ENCODE measurements at regions of chr2 and their contacts with region 1.

Region 1: DNA sequence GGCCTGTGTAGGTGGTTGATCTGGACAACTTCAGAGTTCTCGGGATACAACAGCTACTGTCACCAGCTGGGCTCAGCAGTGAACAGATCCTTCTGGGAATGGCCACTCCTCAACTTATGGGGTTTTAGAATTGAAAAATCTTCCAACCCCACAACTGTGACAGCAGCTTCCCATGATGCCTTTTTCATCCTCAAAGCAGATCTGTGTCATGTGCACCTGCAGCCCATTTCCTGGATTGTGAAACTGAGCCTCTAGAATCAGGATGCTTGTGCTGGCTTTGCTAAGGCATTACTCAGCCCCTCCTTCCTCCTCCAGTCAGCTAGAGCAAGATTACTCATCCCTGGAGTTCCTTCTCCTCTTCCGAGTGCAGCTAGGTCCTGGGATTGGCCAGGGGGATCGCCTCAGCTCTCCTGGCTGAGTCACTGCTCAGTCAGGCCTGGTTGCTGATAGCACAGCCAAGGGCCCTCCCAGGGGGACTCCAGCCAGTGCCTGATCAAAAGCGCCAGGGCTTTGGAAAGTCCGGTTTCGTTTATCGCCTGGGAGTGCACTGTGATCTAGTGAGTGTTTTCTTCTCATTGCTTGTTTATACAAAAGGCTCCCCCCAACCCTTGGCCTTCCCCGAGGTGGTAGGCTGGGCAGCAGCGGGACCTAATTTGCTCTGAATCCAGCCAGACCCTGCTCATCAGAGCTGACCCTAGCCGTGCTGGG is 2.4 kb upstream of the LPIN1 start:
- DNase-seq: peak; percentile 94
- H3K4me3 ChIP-seq: peak overlapping the region; percentile 30 to 54
- H3K27ac ChIP-seq: peak overlapping the region; percentile 60 to 81
- H3K4me1 ChIP-seq: peaks cover 22 to 47% of the 10 kb centered on the region in 2 experiments
- H3K27me3 ChIP-seq: no peaks in the 10 kb centered on the region
- CTCF ChIP-seq: no peak
- EP300 ChIP-seq: peak; percentile 72 to 74; a peak in 2 of 4 replicates
- RAD21 ChIP-seq: peak; percentile 46

Region 2: GRCh38 chr2:11357428-11357972 is 386.5 kb before region 1 on chr2:
- CTCF ChIA-PET with region 1: no interaction called
- POLR2A ChIA-PET with region 1: no interaction called
- DNase-seq: no peak
- H3K4me3 ChIP-seq: no peak overlapping the region
- H3K27ac ChIP-seq: no peak overlapping the region
- H3K4me1 ChIP-seq: no peaks in the 10 kb centered on the region
- H3K27me3 ChIP-seq: no peaks in the 10 kb centered on the region; the same call in 1 of the 2 replicates
- CTCF ChIP-seq: no peak
- EP300 ChIP-seq: no peak
- RAD21 ChIP-seq: no peak

Region 3: DNA sequence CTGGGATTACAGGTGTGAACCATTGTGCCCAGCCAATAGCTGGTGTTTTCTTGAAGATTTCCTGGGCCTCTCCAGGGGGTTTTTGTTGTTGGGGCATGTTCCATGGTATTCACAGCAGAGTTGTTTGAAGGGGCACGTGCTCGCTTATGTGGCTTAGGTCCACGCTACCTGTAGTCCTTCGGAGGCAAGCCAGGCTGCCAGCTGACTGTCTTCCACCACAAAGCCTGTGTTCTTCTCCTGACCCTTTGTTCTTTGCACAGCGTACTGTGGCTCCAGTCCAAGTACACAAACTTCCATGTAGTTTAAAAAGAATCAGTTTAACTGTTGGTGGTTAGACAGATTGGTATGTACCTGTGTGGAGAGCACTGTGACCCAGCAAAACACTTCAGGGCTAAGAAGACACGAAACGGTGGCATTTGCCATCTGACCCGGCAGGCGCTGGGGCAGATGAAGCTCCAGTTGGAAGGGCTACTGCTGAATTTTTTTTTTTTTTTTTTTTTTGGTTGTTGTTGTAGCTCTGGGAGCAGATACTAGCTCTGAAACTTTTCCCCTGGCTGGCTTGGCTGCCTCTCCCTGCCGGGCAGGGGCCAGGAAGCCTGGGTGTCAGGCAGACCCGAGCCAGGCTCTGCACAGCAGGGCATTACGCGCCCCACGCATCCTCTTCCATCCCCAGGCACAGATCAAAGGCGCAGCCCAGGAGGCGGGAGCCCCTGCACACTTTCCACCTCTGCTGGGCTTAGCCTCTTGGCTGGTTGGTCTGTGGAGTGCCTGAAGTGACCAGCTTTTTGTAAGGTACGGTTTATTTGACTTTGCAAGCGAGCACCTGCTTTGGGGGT is 204.5 kb before region 1 on chr2:
- CTCF ChIA-PET with region 1: no interaction called
- POLR2A ChIA-PET with region 1: no interaction called
- DNase-seq: no peak
- H3K4me3 ChIP-seq: no peak overlapping the region
- H3K27ac ChIP-seq: no peak overlapping the region
- H3K4me1 ChIP-seq: peaks cover 0 to 43% of the 10 kb centered on the region in 2 experiments; a peak in 2 of 4 replicates
- H3K27me3 ChIP-seq: peaks cover 16% of the 10 kb centered on the region; the same call in 1 of the 2 replicates
- CTCF ChIP-seq: no peak
- EP300 ChIP-seq: no peak
- RAD21 ChIP-seq: no peak

Region 4: GRCh38 chr2:11716689-11717321 is 27.2 kb before region 1 on chr2:
- CTCF ChIA-PET with region 1: interaction called, 31 read pairs
- POLR2A ChIA-PET with region 1: interaction called, 9 read pairs
- DNase-seq: no peak
- H3K4me3 ChIP-seq: no peak overlapping the region
- H3K27ac ChIP-seq: no peak overlapping the region
- H3K4me1 ChIP-seq: peaks cover 0 to 51% of the 10 kb centered on the region in 2 experiments; a peak in 2 of 4 replicates
- H3K27me3 ChIP-seq: peaks cover 23% of the 10 kb centered on the region; the same call in 1 of the 2 replicates
- CTCF ChIP-seq: no peak
- EP300 ChIP-seq: no peak
- RAD21 ChIP-seq: no peak

Region 5: DNA sequence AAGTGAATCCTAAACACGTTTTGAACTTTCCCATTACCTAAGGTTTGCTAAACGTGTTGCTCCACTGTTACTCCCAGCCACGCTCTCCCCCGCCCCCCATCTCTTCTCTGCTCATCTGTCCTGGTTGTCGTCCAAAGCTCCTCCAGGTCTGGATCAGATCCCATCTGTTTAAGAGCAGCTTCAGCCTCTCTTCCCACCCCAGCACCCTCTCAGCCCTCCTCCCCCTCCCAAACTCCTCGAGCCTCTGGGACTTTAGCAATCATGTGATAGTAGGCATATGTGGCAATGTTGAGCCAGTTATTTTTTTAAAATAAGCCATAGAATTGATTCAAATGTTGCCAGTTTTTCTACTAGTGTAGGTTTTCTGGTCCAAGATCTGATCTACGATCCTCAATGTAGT is 17.6 kb before region 1 on chr2:
- CTCF ChIA-PET with region 1: interaction called, 40 read pairs
- POLR2A ChIA-PET with region 1: interaction called, 4 read pairs
- DNase-seq: peak; percentile 78
- H3K4me3 ChIP-seq: no peak overlapping the region
- H3K27ac ChIP-seq: peak overlapping the region in 1 of 2 experiments; percentile 81; a peak in 2 of 4 replicates
- H3K4me1 ChIP-seq: peaks cover 0 to 21% of the 10 kb centered on the region in 2 experiments; a peak in 2 of 4 replicates
- H3K27me3 ChIP-seq: peaks cover 10% of the 10 kb centered on the region; the same call in 1 of the 2 replicates
- CTCF ChIP-seq: no peak
- EP300 ChIP-seq: peak in 1 of 2 experiments; percentile 85; a peak in 2 of 4 replicates
- RAD21 ChIP-seq: peak; percentile 23

Region 6: DNA sequence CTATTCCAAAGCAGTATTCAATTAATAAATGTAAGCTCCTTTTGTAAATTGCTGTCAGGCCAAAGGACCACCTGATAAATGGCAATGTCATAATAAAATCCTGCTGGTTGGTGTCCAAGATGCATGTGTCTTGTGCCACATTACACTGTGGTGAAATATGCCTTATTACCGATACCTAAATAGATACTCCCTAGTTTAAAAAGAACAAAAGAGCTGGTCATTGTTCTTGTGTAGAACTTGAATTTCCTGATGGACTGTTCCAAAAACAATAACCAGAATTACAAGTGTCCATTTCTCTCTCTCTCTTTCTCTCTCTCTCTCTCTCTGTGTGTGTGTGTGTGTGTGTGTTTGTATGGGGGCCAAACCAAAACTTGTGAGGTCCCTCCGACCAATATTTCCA is 11.4 kb before region 1 on chr2:
- CTCF ChIA-PET with region 1: interaction called, 40 read pairs
- POLR2A ChIA-PET with region 1: interaction called, 3 read pairs
- DNase-seq: no peak
- H3K4me3 ChIP-seq: no peak overlapping the region
- H3K27ac ChIP-seq: no peak overlapping the region
- H3K4me1 ChIP-seq: no peaks in the 10 kb centered on the region
- H3K27me3 ChIP-seq: peaks cover 4% of the 10 kb centered on the region; the same call in 1 of the 2 replicates
- CTCF ChIP-seq: no peak
- EP300 ChIP-seq: no peak
- RAD21 ChIP-seq: no peak

Region 7: DNA sequence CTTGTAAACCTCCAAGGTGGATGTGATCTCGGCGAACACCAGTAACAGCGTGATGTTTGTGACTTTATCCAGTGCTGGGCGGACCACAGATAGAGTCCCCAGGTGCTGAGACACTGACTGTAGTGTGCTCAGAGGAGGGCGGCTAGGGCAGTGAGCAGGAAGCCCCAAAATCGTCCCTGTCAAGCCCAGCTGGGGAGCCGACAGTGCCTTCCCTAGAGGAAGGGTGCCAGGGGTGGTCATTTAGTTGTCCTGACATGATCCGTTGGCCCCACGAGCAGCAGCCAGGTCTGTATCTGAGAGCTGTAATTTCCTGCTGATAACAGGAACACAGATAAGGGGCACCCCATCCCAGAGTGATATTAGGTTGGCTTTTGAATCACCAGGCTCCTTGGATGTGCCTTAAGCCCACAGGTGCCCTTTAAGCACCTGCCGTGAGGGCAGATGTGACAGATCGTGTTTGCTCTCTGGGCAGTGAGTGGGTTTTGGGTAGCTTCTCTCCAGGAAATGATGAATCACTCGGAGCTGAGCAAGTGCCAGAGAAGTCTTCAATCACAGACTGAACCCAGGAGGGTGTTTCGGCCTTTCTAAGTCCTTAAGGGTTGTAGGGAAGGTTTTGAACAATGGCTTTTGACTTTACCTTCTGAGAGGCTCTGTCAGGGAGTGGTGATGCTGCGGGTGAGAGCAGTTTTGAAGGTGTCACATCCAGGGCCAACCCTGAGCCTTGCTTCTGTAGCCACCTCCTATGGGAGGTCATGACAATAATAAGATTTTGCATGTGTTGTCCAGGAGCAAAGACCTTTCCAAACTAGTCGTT is 10.1 kb after region 1 on chr2:
- CTCF ChIA-PET with region 1: interaction called, 15 read pairs
- POLR2A ChIA-PET with region 1: interaction called, 5 read pairs
- DNase-seq: peak; percentile 77
- H3K4me3 ChIP-seq: no peak overlapping the region
- H3K27ac ChIP-seq: peak overlapping the region in 1 of 2 experiments; percentile 73; a peak in 2 of 4 replicates
- H3K4me1 ChIP-seq: peaks cover 23 to 45% of the 10 kb centered on the region in 2 experiments
- H3K27me3 ChIP-seq: no peaks in the 10 kb centered on the region
- CTCF ChIP-seq: no peak
- EP300 ChIP-seq: peak in 1 of 2 experiments; percentile 67; a peak in 1 of 4 replicates
- RAD21 ChIP-seq: no peak

Region 8: GRCh38 chr2:11764359-11764758 is 20.4 kb after region 1 on chr2:
- CTCF ChIA-PET with region 1: interaction called, 57 read pairs
- POLR2A ChIA-PET with region 1: interaction called, 10 read pairs
- DNase-seq: peak; percentile 89
- H3K4me3 ChIP-seq: no peak overlapping the region
- H3K27ac ChIP-seq: peak overlapping the region in 1 of 2 experiments; percentile 97; a peak in 2 of 4 replicates
- H3K4me1 ChIP-seq: peaks cover 0 to 48% of the 10 kb centered on the region in 2 experiments; a peak in 2 of 4 replicates
- H3K27me3 ChIP-seq: no peaks in the 10 kb centered on the region
- CTCF ChIP-seq: no peak
- EP300 ChIP-seq: peak in 1 of 2 experiments; percentile 97; a peak in 2 of 4 replicates
- RAD21 ChIP-seq: peak; percentile 32

Region 9: DNA sequence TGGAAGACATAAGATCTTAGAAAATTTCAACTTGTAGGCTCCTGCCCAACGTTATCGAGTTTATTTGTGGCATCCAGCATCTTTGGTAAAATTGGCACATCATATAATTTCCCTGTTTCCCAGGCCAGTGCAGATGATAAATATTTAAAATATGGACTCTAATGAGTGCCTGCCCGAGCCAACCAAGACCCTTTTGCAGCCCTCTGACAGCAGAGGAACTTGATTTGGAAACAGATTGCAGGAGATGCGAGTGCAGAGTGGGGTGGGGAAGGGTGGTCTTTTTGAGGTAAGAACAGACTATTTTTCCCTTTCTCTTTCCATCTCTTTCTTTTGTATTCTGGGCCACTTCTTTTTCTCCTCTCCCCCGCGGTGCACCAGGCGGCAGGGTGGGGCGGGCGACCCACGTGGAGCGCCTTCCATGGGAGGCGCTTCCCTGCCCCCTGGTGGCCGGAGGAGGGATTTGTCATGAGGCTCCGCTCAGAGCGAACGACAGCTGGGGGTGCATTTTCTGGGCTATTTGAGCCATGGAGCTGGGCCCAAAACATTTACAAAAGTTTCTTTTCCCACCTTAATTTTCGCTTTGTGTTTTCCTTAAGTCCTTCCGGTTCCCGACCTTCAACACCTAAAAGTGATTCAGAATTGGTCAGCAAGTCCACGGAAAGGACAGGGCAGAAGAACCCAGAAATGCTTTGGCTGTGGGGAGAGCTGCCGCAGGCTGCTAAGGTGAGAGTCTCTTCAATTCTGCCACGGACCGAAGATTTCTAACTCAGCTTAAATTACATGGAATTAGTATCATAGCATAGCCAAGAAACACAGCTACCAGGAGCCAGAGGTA is 35.1 kb after region 1 on chr2:
- CTCF ChIA-PET with region 1: interaction called, 454 read pairs
- POLR2A ChIA-PET with region 1: interaction called, 8 read pairs
- DNase-seq: peak; percentile 95
- H3K4me3 ChIP-seq: peak overlapping the region in 1 of 2 experiments; percentile 33; a peak in 1 of 4 replicates
- H3K27ac ChIP-seq: no peak overlapping the region
- H3K4me1 ChIP-seq: peaks cover 6 to 10% of the 10 kb centered on the region in 2 experiments; a peak in 2 of 4 replicates
- H3K27me3 ChIP-seq: no peaks in the 10 kb centered on the region
- CTCF ChIP-seq: peak; percentile 99
- EP300 ChIP-seq: no peak
- RAD21 ChIP-seq: peak; percentile 97